Psoas muscle (tissue), 8 donors: ENCODE measurements at regions of chr7 and their contacts with region 1.

Region 1: GRCh38 chr7:749140-749551 is 22.1 kb upstream of the PRKAR1B start:
- DNase-seq: peak in 1 of 2 donors; percentile 30
- ATAC-seq: no peak
- H3K4me3 ChIP-seq: no peak overlapping the region
- H3K27ac ChIP-seq: no peak overlapping the region
- H3K4me1 ChIP-seq: no peaks in the 10 kb centered on the region
- H3K27me3 ChIP-seq: no peaks in the 10 kb centered on the region
- CTCF ChIP-seq: no peak

Region 2: GRCh38 chr7:767941-768731 is 19.0 kb after region 1 on chr7:
- intact Hi-C with region 1: loop called in 1 of 2 experiments (anchors 2 kb)
- DNase-seq: peak in 1 of 2 donors; percentile 60
- ATAC-seq: peak; percentile 24 to 59 (median 51)
- H3K4me3 ChIP-seq: peak overlapping the region; percentile 8
- H3K27ac ChIP-seq: peak overlapping the region; percentile 74
- H3K4me1 ChIP-seq: peaks cover 22% of the 10 kb centered on the region
- H3K27me3 ChIP-seq: no peaks in the 10 kb centered on the region
- CTCF ChIP-seq: no peak